Upper lobe of right lung (tissue), 1 donor: ENCODE measurements at regions of chr3 and their contacts with region 1.

Region 1: GRCh38 chr3:45938864-45939263 is 4.4 kb upstream of the CXCR6 start:
- DNase-seq: peak; percentile 77
- ATAC-seq: peak; percentile 96
- H3K4me3 ChIP-seq: no peak overlapping the region
- H3K27ac ChIP-seq: peak overlapping the region; percentile 25
- H3K4me1 ChIP-seq: peaks cover 16% of the 10 kb centered on the region
- H3K27me3 ChIP-seq: no peaks in the 10 kb centered on the region
- CTCF ChIP-seq: peak; percentile 89

Region 2: GRCh38 chr3:45583021-45583851 is 355.6 kb before region 1 on chr3:
- intact Hi-C with region 1: no loop called
- DNase-seq: no peak
- ATAC-seq: peak; percentile 61
- H3K4me3 ChIP-seq: no peak overlapping the region
- H3K27ac ChIP-seq: peak overlapping the region; percentile 20
- H3K4me1 ChIP-seq: peaks cover 14% of the 10 kb centered on the region
- H3K27me3 ChIP-seq: no peaks in the 10 kb centered on the region
- CTCF ChIP-seq: no peak

Region 3: GRCh38 chr3:46078712-46079400 is 140.0 kb after region 1 on chr3:
- intact Hi-C with region 1: loop called (anchors 5 kb)
- DNase-seq: peak; percentile 74
- ATAC-seq: peak; percentile 100
- H3K4me3 ChIP-seq: no peak overlapping the region
- H3K27ac ChIP-seq: no peak overlapping the region
- H3K4me1 ChIP-seq: peaks cover 4% of the 10 kb centered on the region
- H3K27me3 ChIP-seq: no peaks in the 10 kb centered on the region
- CTCF ChIP-seq: peak; percentile 96